PC-9 (cell line): ENCODE measurements at regions of chr12 and their contacts with region 1.

Region 1: GRCh38 chr12:116015525-116015924 is 262.0 kb downstream of the MED13L start:
- DNase-seq: no peak
- H3K4me3 ChIP-seq: no peak overlapping the region
- H3K27ac ChIP-seq: no peak overlapping the region
- H3K4me1 ChIP-seq: no peaks in the 10 kb centered on the region
- H3K27me3 ChIP-seq: no peaks in the 10 kb centered on the region
- CTCF ChIP-seq: peak; percentile 57

Region 2: GRCh38 chr12:116266168-116266601 is 250.7 kb after region 1 on chr12:
- CTCF ChIA-PET with region 1: no interaction called
- POLR2A ChIA-PET with region 1: no interaction called
- intact Hi-C with region 1: loop called (anchors 10 kb)
- DNase-seq: no peak
- H3K4me3 ChIP-seq: no peak overlapping the region
- H3K27ac ChIP-seq: no peak overlapping the region
- H3K4me1 ChIP-seq: peaks cover 29% of the 10 kb centered on the region
- H3K27me3 ChIP-seq: no peaks in the 10 kb centered on the region
- CTCF ChIP-seq: no peak

Region 3: GRCh38 chr12:116382686-116383531 is 367.4 kb after region 1 on chr12:
- CTCF ChIA-PET with region 1: no interaction called
- POLR2A ChIA-PET with region 1: no interaction called
- intact Hi-C with region 1: loop called (anchors 10 kb)
- DNase-seq: no peak
- H3K4me3 ChIP-seq: no peak overlapping the region
- H3K27ac ChIP-seq: no peak overlapping the region
- H3K4me1 ChIP-seq: peaks cover 39% of the 10 kb centered on the region
- H3K27me3 ChIP-seq: no peaks in the 10 kb centered on the region
- CTCF ChIP-seq: no peak